ENCODE measurements at regions of chr17 and their contacts with region 1.

Region 1: GRCh38 chr17:50087246-50087911 is 7.8 kb upstream of the PDK2 start:
- DNase-seq: peak; percentile 50 to 66 (median 57)
- H3K4me3 ChIP-seq: no peak overlapping the region
- H3K4me3 Mint-ChIP-seq: no peak overlapping the region
- H3K27ac ChIP-seq: no peak overlapping the region
- H3K27ac Mint-ChIP-seq: no peak overlapping the region
- H3K4me1 ChIP-seq: no peaks in the 10 kb centered on the region
- H3K4me1 Mint-ChIP-seq: no peaks in the 10 kb centered on the region
- H3K27me3 ChIP-seq: no peaks in the 10 kb centered on the region
- H3K27me3 Mint-ChIP-seq: peaks cover 4 to 11% (median 10%) of the 10 kb centered on the region in 3 donors
- CTCF ChIP-seq: peak; percentile 97

Region 2: DNA sequence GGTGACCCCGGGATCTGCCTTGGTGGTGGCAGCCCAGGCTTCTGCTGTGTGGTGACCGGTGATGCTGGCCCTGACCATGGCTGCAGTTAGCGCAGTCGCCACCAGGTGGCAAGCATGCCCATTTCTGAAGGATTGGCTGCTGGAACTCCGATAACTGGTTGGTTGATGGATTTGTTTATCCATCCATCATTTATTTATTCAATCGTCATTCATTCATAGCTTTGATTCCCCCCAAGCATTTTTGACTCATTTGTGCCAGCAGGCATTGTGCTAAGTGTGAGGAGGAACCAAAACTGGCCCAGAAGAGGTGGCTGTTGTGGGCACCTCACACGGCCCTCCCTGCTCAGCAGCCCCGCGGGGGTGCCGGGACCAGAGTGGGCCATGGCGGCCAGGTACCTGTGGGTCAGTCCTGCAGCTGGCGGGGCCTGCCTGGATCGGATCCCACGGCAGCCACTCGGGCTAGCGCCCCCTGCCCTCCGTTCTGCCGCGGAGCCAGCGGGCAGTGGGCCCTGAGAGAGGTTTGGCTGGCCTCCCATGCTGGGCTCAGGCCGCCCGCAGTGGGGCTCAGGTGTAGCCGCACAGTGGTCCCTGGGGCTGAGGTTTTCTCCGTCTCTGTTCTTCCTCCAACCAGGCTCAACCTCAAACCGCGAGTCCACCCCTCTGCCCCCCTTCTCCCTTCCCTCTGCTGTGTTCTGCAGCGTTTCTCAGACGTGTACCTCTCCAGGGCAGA is 60.3 kb before region 1 on chr17:
- intact Hi-C with region 1: loop called (anchors 1 to 2 kb)
- DNase-seq: peak; percentile 46 to 62 (median 57)
- H3K4me3 ChIP-seq: peak overlapping the region in 1 of 3 experiments; percentile 32
- H3K4me3 Mint-ChIP-seq: peak overlapping the region; percentile 56 to 65
- H3K27ac ChIP-seq: no peak overlapping the region
- H3K27ac Mint-ChIP-seq: peak overlapping the region in 2 of 7 donors; percentile 73 to 75
- H3K4me1 ChIP-seq: peaks cover 10 to 16% of the 10 kb centered on the region in 2 donors
- H3K4me1 Mint-ChIP-seq: peaks cover 19% of the 10 kb centered on the region
- H3K27me3 ChIP-seq: peaks cover 0 to 21% of the 10 kb centered on the region in 2 donors
- H3K27me3 Mint-ChIP-seq: peaks cover 25 to 38% (median 28%) of the 10 kb centered on the region in 3 donors
- CTCF ChIP-seq: peak; percentile 92